Activated CD4-positive, alpha-beta T cell treated with anti-CD3 and anti-CD28 coated beads for 36 hours (primary cell): ENCODE measurements at regions of chr7 and their contacts with region 1.

Region 1: DNA sequence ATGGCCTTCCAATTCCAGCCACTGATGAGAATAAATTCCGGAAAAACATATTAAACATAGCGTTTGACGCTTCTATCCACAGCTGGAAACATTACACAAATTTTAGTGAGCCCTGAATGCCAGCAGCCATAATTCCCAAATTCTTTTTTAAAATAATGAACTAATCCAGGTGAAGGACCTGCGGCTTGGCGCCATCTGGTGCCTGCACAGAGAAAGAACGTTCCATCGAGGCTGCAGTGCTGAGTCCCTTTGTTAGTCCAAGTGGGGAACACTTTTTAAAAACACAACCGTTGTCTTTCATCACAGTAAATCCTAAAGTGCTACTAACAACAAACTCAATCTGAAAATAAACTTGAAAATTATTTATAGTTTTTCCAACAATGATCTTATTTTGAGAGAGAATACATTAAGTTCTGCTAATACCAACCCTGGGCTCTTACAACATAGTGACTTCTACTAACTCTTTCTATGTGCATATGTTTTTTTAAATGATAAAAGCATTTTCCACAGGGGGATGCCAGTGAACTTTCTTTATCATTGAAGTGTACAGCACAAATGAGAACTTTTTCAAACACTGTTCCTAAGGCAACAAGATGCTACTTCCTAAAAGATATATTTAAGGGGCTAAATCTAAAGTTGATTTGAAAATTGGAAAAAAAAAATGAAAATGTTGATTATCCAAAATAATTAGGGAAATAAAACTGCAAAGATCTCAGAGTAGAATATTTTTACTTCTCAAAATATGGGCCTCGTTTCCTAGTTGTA is 166.9 kb upstream of the RNF32 start:
- DNase-seq: peak; percentile 63
- ATAC-seq: no peak
- H3K4me3 Mint-ChIP-seq: no peak overlapping the region
- H3K27ac Mint-ChIP-seq: no peak overlapping the region
- H3K4me1 Mint-ChIP-seq: no peaks in the 10 kb centered on the region
- H3K27me3 Mint-ChIP-seq: peaks cover 30% of the 10 kb centered on the region

Region 2: DNA sequence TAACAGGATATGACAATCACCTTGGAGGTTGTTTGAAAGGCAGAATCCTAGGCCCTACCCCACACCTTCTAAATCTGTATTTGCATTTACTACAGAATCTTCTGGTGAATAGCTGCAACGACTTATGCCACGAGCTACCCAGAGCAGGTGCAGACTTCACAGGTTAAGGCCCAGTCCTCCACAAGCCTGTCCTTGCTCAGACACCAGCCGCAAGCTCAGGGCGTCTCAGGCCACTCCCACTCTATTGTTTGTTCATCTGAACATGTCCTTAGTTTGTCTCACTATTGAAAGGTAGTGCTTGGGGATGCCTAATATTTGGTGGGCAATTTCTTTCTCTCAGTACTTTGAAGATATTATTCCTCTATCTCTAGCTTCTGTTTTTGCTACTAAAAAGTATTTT is 848.1 kb before region 1 on chr7:
- CTCF ChIA-PET with region 1: no interaction called
- POLR2A ChIA-PET with region 1: no interaction called
- intact Hi-C with region 1: no loop called
- DNase-seq: no peak
- ATAC-seq: no peak
- H3K4me3 Mint-ChIP-seq: no peak overlapping the region
- H3K27ac Mint-ChIP-seq: no peak overlapping the region
- H3K4me1 Mint-ChIP-seq: no peaks in the 10 kb centered on the region
- H3K27me3 Mint-ChIP-seq: peaks cover 5% of the 10 kb centered on the region

Region 3: DNA sequence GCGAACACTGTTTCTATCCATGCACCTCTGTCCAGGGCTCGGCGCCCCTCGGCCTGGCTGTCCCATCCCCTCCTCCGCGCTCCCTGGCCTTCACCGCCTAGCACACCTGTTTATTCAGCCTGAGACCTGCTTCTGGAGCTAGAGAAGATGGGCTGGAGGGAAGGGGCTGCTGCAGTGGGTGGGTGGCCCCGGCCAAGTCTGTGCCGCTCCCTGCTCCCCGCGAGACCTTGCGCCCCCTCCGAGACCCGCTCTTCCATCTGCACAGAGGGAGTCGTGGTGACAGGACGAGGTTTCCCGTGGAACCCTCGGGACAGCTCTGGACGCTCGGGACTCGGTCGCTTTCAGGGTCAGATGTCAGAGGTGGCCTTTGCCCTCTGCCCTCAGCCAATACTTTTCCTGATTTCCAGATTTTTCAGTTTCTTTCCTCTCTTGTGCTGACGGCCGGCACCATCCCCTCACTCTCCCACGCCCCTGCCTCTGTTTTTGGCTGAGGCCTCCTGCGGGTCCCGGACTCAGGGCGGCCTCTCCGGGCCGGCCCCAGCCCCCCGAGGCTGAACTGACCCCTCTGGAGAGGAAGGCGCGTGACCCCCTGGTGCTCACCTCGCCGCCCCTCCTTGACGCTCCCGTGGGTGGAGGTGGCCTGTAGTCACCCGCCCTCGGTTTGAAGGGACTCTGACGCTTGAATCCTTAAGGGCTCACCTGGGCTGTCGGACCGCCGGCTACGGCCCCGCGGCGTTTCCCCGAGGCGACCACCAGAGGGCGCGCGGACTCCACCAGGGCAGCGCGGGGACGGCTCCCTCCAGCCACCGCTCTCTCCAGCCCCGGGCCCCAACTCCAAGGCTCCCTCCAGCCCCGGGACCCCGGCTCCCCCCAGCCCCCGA is 677.0 kb before region 1 on chr7:
- CTCF ChIA-PET with region 1: interaction called, 6 read pairs
- POLR2A ChIA-PET with region 1: no interaction called
- intact Hi-C with region 1: loop called in 1 of 2 experiments (anchors 5 kb)
- DNase-seq: peak; percentile 82
- ATAC-seq: peak; percentile 85
- H3K4me3 Mint-ChIP-seq: no peak overlapping the region
- H3K27ac Mint-ChIP-seq: no peak overlapping the region
- H3K4me1 Mint-ChIP-seq: no peaks in the 10 kb centered on the region
- H3K27me3 Mint-ChIP-seq: peaks cover 25% of the 10 kb centered on the region

Region 4: DNA sequence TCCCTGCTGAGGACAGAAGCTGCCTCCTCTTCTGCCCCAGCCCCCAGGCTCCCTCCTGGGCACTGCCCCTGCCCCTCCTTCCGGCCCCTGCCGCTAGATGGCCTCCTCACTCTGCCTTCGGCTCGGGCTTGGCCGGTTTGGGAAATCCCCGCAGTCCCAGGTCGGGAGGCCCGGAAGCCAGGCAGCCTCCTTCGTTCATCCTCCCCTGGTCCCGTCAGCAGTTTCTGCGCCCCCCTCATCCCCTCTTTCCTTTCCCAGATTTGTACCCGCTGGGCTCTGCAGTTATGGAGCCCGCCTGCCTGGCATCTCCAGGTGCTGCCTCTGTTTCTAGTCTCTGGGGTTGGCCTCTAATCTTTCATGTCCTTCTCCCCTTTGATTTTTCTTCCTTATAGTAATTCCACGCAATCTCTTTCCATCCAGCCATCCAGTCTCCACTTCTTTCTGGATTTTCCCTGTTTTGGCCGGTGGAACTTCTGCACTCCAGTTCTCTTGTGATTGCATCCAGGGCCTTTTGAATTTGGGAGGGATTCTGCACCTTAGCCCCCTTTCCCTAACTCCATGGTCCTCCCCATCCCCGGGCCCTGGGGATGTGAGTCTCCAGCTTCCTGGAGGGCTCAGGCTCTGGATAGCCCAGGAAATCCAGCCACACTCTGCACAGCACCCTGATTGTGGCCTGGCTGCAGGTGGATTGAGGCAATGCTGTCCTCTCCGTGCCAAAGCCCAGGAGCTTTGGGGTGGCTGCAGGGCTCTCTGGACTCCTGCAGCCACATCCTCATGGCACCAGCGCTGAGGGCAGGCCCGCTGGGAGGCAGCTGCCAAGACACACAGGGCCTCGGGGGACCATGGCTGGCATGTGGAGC is 658.1 kb before region 1 on chr7:
- CTCF ChIA-PET with region 1: interaction called, 4 read pairs
- POLR2A ChIA-PET with region 1: no interaction called
- intact Hi-C with region 1: loop called (anchors 1 to 5 kb)
- DNase-seq: peak; percentile 89
- ATAC-seq: peak; percentile 90
- H3K4me3 Mint-ChIP-seq: no peak overlapping the region
- H3K27ac Mint-ChIP-seq: no peak overlapping the region
- H3K4me1 Mint-ChIP-seq: peaks cover 12% of the 10 kb centered on the region
- H3K27me3 Mint-ChIP-seq: peaks cover 41% of the 10 kb centered on the region

Region 5: DNA sequence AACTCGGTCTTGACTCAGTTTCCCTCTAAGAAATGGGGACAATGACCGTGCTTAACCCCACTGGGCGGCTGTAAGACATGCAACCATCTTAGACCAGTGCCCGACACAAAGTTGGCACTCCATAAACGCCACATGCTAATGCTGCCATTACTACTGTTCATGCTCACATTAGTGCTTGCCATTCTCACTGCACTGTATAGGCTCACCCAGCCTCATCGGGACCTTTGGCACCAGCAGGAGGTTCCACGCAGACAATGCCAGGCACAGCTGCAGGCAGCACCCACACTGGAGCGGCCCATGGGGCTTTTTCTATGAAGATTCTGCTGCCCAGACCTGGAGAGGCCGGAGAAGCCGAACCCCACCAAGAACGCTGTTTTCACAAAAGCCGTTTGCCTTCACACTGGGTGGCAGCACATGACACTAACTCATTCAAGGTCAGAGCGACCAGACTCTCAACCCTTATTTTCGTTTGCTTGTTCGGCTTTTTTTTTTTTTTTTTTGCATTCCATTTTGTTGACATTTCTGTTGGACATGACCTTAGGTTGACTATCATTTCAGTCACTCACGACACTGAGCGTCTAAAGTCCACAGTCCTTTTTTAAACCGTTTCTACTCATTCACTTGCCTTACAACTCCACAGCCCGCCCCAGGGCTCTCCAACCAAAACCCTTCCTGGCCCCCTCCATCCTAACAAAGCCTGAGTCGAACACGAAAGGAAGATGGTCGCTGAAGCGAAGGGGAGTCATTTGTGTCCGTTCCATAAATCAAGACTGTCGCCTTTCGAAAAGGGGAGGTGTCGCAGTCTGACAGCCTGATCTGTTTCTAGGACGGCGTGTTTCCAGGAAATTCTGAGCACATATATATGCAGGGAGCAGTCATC is 42.5 kb after region 1 on chr7:
- CTCF ChIA-PET with region 1: no interaction called
- POLR2A ChIA-PET with region 1: no interaction called
- intact Hi-C with region 1: no loop called
- DNase-seq: no peak
- ATAC-seq: no peak
- H3K4me3 Mint-ChIP-seq: no peak overlapping the region
- H3K27ac Mint-ChIP-seq: no peak overlapping the region
- H3K4me1 Mint-ChIP-seq: no peaks in the 10 kb centered on the region
- H3K27me3 Mint-ChIP-seq: peaks cover 11% of the 10 kb centered on the region

Region 6: GRCh38 chr7:156612930-156613329 is 139.3 kb after region 1 on chr7:
- CTCF ChIA-PET with region 1: no interaction called
- POLR2A ChIA-PET with region 1: no interaction called
- intact Hi-C with region 1: no loop called
- DNase-seq: peak; percentile 87
- ATAC-seq: peak; percentile 99
- H3K4me3 Mint-ChIP-seq: no peak overlapping the region
- H3K27ac Mint-ChIP-seq: no peak overlapping the region
- H3K4me1 Mint-ChIP-seq: peaks cover 25% of the 10 kb centered on the region
- H3K27me3 Mint-ChIP-seq: peaks cover 47% of the 10 kb centered on the region